Right lobe of liver (tissue), 6 donors: ENCODE measurements at regions of chr1 and their contacts with region 1.

Region 1: GRCh38 chr1:209989525-209989924 is 51.5 kb downstream of the SYT14 start:
- DNase-seq: no peak
- ATAC-seq: peak in 2 of 4 donors; percentile 49 to 51
- H3K4me3 ChIP-seq: no peak overlapping the region
- H3K27ac ChIP-seq: no peak overlapping the region
- H3K4me1 ChIP-seq: peaks cover 0 to 8% (median 0%) of the 10 kb centered on the region in 4 donors
- H3K27me3 ChIP-seq: no peaks in the 10 kb centered on the region
- CTCF ChIP-seq: peak; percentile 21 to 45 (median 39)
- POLR2A ChIP-seq: no peak

Region 2: DNA sequence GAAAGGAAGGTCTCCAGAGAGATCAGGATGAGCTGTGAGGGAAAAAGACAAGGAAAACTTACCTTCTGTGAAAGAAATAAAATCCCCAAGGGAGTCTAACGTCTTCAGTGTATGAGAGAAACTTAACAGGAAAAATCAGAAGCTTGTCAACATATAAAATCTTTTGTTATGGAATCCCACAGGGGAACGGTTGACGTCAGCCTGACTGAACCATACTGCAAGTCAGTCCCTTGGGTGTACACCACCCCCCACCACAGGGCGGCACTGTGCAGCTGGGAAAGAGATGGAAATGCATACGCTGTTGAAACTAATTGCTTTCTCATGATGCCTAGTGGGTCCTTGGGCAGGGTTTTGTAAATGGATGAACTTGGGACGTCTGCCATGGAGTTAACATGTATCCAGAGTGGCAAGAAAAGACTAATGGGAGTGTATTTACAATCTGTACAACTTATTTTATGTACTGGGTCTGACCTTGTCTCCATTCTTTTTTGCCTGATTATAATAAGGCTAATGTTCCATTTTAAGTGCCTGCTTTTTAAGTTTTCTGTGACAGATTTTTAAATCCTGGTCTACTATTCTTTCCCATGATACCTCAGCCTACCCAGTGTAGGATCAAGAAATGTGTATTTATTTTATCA is 139.1 kb before region 1 on chr1:
- intact Hi-C with region 1: loop called in 1 of 2 experiments (anchors 10 kb)
- DNase-seq: peak in 1 of 3 donors; percentile 40
- ATAC-seq: peak in 3 of 4 donors; percentile 55 to 59 (median 58)
- H3K4me3 ChIP-seq: no peak overlapping the region
- H3K27ac ChIP-seq: no peak overlapping the region
- H3K4me1 ChIP-seq: no peaks in the 10 kb centered on the region
- H3K27me3 ChIP-seq: no peaks in the 10 kb centered on the region
- CTCF ChIP-seq: peak in 3 of 4 donors; percentile 43 to 51 (median 47)
- POLR2A ChIP-seq: no peak

Region 3: GRCh38 chr1:209860293-209860881 is 129.1 kb before region 1 on chr1:
- intact Hi-C with region 1: loop called (anchors 10 kb)
- DNase-seq: peak; percentile 73 to 75 (median 73)
- ATAC-seq: peak; percentile 92 to 96 (median 95)
- H3K4me3 ChIP-seq: no peak overlapping the region
- H3K27ac ChIP-seq: no peak overlapping the region
- H3K4me1 ChIP-seq: no peaks in the 10 kb centered on the region
- H3K27me3 ChIP-seq: no peaks in the 10 kb centered on the region
- CTCF ChIP-seq: peak; percentile 66 to 95 (median 90)
- POLR2A ChIP-seq: no peak